Left cardiac atrium (tissue), 4 donors: ENCODE measurements at regions of chr5 and their contacts with region 1.

Region 1: GRCh38 chr5:181191529-181192394 is 13.2 kb downstream of the TRIM7 start:
- DNase-seq: peak; percentile 95
- ATAC-seq: peak; percentile 81 to 84

Region 2: GRCh38 chr5:180683220-180683922 is 508.4 kb before region 1 on chr5:
- intact Hi-C with region 1: no loop called
- DNase-seq: no peak
- ATAC-seq: no peak

Region 3: DNA sequence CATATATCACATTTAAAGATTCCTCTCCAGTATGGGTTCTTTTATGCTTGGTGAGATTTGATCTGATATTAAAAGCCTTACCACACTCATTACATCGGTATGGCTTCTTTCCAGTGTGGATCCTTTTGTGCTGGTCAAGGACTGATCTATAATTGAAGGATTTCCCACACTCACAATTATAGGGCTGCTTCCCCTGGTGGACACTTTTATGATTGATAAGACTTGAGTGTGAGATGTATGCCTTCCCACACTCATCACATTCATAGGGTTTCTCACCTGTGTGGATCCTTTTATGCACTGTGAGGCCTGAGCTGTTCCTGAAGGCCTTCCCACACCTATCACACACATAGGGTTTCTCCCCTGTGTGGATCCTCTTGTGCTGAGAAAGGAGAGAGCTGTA is 342.9 kb before region 1 on chr5:
- intact Hi-C with region 1: no loop called
- DNase-seq: no peak
- ATAC-seq: no peak

Region 4: GRCh38 chr5:181114844-181115778 is 76.7 kb before region 1 on chr5:
- intact Hi-C with region 1: no loop called
- DNase-seq: no peak
- ATAC-seq: no peak

Region 5: DNA sequence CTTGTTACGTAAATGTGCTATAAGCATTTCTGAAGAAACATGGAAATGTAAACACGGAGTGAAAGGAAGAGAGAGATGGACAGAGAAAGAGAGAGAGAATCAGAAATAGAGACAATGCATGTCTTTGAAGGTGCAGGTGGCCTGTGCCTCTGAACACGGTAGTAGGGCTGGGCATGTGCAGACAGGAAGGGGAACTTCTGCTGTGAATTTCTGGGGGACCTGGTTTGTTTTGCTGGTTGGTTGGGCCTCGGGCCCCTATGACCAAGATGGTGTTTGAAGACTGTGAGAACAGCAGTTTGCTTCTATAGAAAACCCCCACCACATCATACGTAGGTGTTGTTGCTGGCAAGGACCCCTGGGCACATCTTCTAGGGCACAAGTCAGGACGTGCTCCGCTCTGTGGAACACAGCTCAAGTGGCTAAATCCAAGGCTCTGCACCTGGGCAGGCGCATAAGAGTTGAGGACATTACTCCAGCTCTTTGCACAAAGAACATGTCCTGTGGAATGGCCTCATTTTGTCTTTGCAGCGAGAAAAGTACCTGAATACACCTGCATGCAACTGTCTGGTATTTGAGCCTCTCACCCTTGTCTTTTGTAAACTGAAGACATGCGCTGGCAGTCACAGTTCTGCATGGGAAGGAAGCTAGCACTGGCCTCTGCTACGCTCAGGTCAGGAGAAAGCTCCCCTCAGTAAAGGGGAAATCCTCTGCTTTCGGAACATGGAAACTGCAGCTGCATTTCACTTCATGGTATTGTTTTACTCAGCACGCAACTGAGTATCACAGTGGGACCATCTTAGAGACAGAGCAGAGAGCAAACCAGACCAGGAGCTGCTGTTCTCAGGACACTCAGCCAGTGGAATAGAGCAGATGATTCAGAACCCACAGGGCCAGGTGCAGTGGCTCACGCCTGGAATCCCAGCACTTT is 41.7 kb before region 1 on chr5:
- intact Hi-C with region 1: no loop called
- DNase-seq: no peak
- ATAC-seq: no peak

Region 6: DNA sequence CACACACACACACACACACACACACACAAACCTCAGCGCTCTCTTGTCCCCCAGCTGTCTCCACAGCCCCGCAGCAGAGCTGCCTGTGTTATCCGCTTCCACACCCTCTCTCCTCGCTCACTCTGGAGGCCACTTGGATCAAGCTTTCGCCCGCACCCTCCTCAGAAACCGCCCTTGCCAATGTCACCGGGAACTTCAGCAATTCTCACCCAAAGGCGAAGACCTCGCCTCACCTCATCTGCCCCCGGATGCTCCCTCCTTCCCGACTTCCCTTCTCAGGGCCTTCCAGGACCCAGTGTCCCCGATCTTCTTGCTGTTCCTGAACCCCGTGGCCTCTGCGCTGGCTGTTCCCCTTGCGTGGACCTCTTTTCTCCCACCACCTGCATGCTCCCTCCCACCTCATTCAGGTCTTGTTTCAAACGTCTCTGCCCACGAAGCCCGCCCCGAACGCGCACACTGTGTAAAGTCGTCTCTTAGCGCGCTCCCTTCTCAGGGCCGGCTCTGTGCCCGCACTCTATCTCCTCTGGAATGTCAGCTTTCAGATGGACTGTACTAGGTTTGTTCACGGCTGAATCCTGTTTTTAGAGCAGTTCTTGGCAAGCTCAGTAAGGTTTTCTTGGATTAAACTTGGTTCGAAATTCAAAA is 14.1 kb after region 1 on chr5:
- intact Hi-C with region 1: loop called in 1 of 2 experiments (anchors 1 kb)
- DNase-seq: peak; percentile 42
- ATAC-seq: peak; percentile 17 to 23

Region 7: GRCh38 chr5:181223058-181223728 is 31.4 kb after region 1 on chr5 and contains the start of gene TRIM41:
- intact Hi-C with region 1: loop called (anchors 1 to 2 kb)
- DNase-seq: peak; percentile 100
- ATAC-seq: peak; percentile 90
- total RNA-seq, gene TRIM41: 17.1 to 19.1 TPM

Region 8: GRCh38 chr5:181260387-181261319 is 68.9 kb after region 1 on chr5 and contains the start of gene TRIM52:
- intact Hi-C with region 1: loop called in 1 of 2 experiments (anchors 5 kb)
- DNase-seq: peak; percentile 95
- ATAC-seq: peak; percentile 95
- total RNA-seq, gene TRIM52: 9.8 to 10.1 TPM